ENCODE measurements at regions of chr3 and their contacts with region 1.

Region 1: DNA sequence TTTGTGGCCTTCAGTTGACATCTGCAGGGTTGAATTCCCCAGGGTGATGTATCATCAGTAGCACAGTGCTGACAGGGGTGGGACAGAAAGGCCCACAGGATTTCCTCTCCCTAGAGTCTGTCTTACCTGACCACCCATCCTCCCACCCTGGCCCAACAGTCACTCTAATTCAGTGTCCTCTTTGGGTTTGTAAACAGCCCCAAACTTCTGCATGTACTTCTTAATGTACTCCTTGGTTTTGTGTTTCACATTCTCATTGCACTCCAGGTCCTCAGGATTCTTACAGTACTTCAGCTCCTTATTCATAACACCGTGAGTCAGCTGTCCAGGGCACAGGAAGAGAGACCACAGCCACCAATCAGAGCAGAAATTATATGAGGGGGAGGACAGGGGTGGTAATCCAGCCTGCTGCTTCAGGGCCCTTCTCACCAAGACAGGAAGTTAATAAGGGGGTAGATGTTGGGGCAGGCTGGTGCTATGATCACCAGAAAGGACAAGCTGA is 37.5 kb downstream of the NBEAL2 start:
- DNase-seq: peak; percentile 62
- ATAC-seq: peak; percentile 79
- H3K4me3 Mint-ChIP-seq: peak overlapping the region; percentile 24
- H3K27ac Mint-ChIP-seq: peak overlapping the region; percentile 85
- H3K4me1 Mint-ChIP-seq: peaks cover 46% of the 10 kb centered on the region
- H3K27me3 Mint-ChIP-seq: no peaks in the 10 kb centered on the region

Region 2: DNA sequence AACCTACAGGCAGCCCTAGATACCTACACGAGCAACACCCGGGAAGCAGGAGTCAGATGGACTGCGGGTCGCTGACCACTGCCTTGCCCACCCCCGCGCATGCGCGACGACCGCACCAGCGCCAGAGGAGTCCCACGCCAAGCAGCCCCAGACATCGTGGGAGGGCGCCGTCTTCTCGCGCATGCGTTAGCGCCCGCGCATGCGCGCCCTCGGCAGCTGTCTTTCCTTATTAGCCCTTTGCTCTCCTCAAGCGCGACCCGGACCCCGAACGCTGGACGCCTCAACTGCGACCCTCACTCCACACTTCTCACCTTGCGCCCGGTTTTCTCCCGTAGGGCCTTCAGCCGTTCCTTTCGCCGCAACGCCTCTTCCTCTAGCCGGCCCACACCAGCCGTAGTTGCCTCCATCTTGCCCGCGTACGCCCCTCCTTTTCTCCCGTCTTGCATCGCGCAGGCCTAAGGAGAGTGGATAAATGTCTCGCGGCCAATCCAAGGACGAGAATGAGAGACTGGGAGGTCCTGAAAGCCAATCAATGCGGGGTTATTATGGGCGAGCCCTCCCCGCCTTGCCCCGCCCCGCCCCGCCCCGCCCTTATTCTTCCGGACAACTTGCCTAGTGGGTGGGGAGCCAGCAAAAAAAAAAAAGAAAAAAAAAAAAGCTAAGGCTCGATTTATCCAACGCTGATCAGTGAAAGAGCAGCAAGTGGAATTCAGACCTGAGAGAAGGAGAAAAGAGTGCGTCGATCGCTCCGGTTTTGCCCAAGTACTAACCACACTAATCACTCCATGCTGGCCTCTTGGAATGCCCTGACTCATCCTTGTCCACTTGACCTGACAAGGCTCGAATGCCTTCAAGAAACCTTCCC is 40.4 kb before region 1 on chr3 and contains the start of gene CCDC12:
- CTCF ChIA-PET with region 1: no interaction called
- POLR2A ChIA-PET with region 1: no interaction called
- intact Hi-C with region 1: no loop called
- DNase-seq: peak; percentile 96
- ATAC-seq: peak; percentile 82
- H3K4me3 Mint-ChIP-seq: peak within 1 kb of the TSS; percentile 92
- H3K27ac Mint-ChIP-seq: peak within 1 kb of the TSS; percentile 99
- H3K4me1 Mint-ChIP-seq: peaks cover 66% of the 10 kb centered on the region
- H3K27me3 Mint-ChIP-seq: no peaks in the 10 kb centered on the region
- total RNA-seq, gene CCDC12: 45.4 to 47.8 TPM

Region 3: DNA sequence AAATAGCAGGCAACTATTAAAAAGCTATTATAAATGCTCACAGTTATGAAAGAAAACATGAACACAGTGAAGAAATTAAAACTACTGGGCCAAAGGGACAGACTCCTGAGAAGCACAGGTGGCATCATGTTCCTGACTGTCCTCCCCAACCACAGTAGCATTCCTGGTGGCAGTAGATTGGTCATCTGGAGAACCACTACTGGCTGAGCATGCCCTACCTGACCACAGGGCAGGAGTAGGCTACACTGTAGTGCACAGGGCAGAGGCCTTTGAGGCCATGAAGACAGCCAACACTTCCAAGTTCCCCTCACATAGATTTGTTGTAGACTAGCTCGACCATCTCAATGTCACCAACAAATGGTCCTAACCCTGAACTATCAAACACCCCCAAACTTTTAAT is 11.7 kb after region 1 on chr3:
- CTCF ChIA-PET with region 1: interaction called, 24 read pairs
- POLR2A ChIA-PET with region 1: no interaction called
- intact Hi-C with region 1: no loop called
- DNase-seq: no peak
- ATAC-seq: no peak
- H3K4me3 Mint-ChIP-seq: no peak overlapping the region
- H3K27ac Mint-ChIP-seq: no peak overlapping the region
- H3K4me1 Mint-ChIP-seq: peaks cover 46% of the 10 kb centered on the region
- H3K27me3 Mint-ChIP-seq: no peaks in the 10 kb centered on the region

Region 4: GRCh38 chr3:47035634-47036033 is 18.6 kb after region 1 on chr3:
- CTCF ChIA-PET with region 1: interaction called, 24 read pairs
- POLR2A ChIA-PET with region 1: no interaction called
- intact Hi-C with region 1: loop called in 1 of 2 experiments (anchors 2 kb)
- DNase-seq: no peak
- ATAC-seq: no peak
- H3K4me3 Mint-ChIP-seq: no peak overlapping the region
- H3K27ac Mint-ChIP-seq: no peak overlapping the region
- H3K4me1 Mint-ChIP-seq: peaks cover 41% of the 10 kb centered on the region
- H3K27me3 Mint-ChIP-seq: no peaks in the 10 kb centered on the region

Region 5: DNA sequence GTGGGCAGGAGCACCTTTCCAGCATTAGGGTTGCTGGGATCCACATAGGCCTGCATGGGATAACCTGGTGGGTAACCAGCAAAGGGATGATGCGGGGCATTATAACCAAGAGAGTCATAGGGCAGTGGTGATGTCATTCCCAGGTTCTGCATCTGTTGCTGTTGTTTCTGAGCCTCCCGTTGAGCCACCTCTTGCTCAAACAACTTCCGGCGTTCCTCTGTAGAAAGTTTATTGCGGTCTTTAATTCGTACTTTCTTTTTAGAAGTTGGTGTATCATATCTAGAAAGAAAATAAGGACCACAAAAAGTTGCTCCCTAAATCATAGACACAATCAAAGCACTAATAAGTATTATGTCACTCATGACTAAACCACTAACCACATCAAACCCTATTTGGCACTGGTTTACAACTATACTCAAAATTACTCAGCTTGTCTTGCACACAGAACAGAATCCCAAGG is 40.3 kb after region 1 on chr3:
- CTCF ChIA-PET with region 1: no interaction called
- POLR2A ChIA-PET with region 1: no interaction called
- intact Hi-C with region 1: loop called (anchors 1 to 5 kb)
- DNase-seq: peak; percentile 69
- ATAC-seq: peak; percentile 88
- H3K4me3 Mint-ChIP-seq: no peak overlapping the region
- H3K27ac Mint-ChIP-seq: peak overlapping the region; percentile 69
- H3K4me1 Mint-ChIP-seq: peaks cover 37% of the 10 kb centered on the region
- H3K27me3 Mint-ChIP-seq: no peaks in the 10 kb centered on the region

Region 6: DNA sequence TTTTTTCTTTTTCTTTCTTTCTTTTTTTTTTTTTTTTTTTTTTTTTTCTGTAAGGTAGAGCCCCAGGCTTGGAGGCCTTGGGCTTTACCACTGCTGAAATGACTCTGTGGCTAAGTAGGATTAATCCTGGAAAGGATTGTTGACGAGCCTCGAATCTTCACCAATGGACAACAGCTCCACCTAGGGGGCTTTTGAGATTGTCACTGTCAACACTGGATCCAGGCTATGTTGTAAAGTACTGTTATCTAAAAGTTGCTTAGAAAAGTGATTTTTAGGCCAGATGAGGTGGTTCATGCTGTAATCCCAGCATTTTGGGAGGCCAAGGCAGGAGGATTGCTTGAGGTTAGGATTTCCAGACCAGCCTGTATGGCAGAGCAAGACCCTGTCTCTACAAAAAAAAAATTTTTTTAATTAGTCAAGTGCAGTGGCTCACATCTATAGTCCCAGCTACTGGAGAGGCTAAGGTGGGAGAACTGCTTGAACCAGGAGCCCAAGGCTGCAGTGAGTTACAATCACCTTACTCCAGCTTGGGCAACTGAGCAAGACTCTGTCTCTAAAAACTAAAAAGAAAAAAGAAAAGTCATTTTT is 307.4 kb after region 1 on chr3:
- CTCF ChIA-PET with region 1: no interaction called
- POLR2A ChIA-PET with region 1: no interaction called
- intact Hi-C with region 1: loop called in 1 of 2 experiments (anchors 5 kb)
- DNase-seq: peak; percentile 66
- ATAC-seq: peak; percentile 88
- H3K4me3 Mint-ChIP-seq: no peak overlapping the region
- H3K27ac Mint-ChIP-seq: no peak overlapping the region
- H3K4me1 Mint-ChIP-seq: no peaks in the 10 kb centered on the region
- H3K27me3 Mint-ChIP-seq: no peaks in the 10 kb centered on the region

Region 7: GRCh38 chr3:47741925-47742324 is 724.9 kb after region 1 on chr3:
- CTCF ChIA-PET with region 1: no interaction called
- POLR2A ChIA-PET with region 1: no interaction called
- intact Hi-C with region 1: no loop called
- DNase-seq: no peak
- ATAC-seq: no peak
- H3K4me3 Mint-ChIP-seq: no peak overlapping the region
- H3K27ac Mint-ChIP-seq: no peak overlapping the region
- H3K4me1 Mint-ChIP-seq: peaks cover 13% of the 10 kb centered on the region
- H3K27me3 Mint-ChIP-seq: no peaks in the 10 kb centered on the region